ENCODE measurements at regions of chr12 and their contacts with region 1.

Region 1: GRCh38 chr12:54958048-54958658 is 26.4 kb downstream of the TESPA1 start:
- DNase-seq: peak; percentile 59
- H3K4me3 ChIP-seq: no peak overlapping the region
- H3K27ac ChIP-seq: no peak overlapping the region
- H3K4me1 ChIP-seq: no peaks in the 10 kb centered on the region
- H3K27me3 ChIP-seq: no peaks in the 10 kb centered on the region
- CTCF ChIP-seq: peak; percentile 56 to 68 (median 57)
- POLR2A ChIP-seq: no peak

Region 2: GRCh38 chr12:54853995-54854566 is 104.1 kb before region 1 on chr12 and contains the start of gene MUCL1:
- intact Hi-C with region 1: loop called (anchors 10 kb)
- DNase-seq: peak; percentile 82
- H3K4me3 ChIP-seq: no peak within 1 kb of the TSS
- H3K27ac ChIP-seq: no peak within 1 kb of the TSS
- H3K4me1 ChIP-seq: no peaks in the 10 kb centered on the region
- H3K27me3 ChIP-seq: no peaks in the 10 kb centered on the region
- CTCF ChIP-seq: peak; percentile 57 to 76 (median 73)
- POLR2A ChIP-seq: no peak
- total RNA-seq, gene MUCL1: 1.4 TPM in 1 of 2 donors, not detected in the other

Region 3: DNA sequence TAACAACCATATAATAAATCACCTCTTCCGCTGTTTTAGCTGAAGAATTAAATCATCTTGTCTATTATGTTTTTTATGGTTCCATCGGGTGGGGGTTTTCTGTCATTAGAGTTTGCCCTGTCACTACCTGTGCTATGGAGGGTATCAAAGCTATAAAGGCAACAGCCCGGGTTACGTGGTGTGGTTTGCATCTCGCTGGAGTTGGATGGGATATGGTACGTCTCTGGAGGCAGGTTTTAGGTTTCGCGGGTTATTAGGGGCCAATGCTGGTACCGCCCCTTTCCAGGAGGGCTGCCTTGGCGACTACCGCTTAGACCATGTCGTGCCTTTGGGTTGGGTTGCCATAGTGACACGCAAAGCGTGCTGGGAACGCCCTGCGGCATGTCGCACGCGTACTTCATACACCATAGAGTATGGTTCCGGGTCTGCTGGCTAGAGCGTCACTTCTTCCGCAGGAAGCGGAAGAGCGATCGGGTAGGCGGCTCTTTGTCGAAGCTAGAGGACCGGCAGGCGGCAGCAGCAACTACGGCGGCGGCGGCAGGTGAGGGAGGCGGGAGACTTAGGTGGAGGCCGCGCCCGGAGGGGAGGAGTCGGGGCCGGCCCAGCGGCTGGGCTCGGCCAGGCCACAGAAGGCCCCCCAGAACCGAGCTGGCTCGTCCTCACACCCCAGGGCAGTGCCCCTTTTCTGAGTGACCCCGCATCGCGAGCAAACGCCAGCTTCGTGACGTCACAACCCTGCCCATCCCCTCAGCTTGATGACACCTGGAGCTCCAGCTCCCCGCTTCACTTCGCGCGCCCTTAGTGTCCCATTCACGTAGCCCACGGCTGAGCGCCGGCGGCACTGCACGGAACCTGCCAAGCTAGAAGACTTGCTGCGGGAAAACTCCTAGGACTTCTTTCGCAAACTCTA is 1159.9 kb after region 1 on chr12 and contains the start of gene ZC3H10:
- intact Hi-C with region 1: no loop called
- DNase-seq: peak; percentile 99
- H3K4me3 ChIP-seq: peak within 1 kb of the TSS; percentile 80 to 90
- H3K27ac ChIP-seq: peak within 1 kb of the TSS; percentile 89 to 95
- H3K4me1 ChIP-seq: peaks cover 19% of the 10 kb centered on the region
- H3K27me3 ChIP-seq: no peaks in the 10 kb centered on the region
- CTCF ChIP-seq: peak; percentile 23 to 67 (median 61)
- POLR2A ChIP-seq: peak; percentile 88
- total RNA-seq, gene ZC3H10: 16.2 to 20.6 TPM